HCT116 (cell line): ENCODE measurements at regions of chr17 and their contacts with region 1.

Region 1: DNA sequence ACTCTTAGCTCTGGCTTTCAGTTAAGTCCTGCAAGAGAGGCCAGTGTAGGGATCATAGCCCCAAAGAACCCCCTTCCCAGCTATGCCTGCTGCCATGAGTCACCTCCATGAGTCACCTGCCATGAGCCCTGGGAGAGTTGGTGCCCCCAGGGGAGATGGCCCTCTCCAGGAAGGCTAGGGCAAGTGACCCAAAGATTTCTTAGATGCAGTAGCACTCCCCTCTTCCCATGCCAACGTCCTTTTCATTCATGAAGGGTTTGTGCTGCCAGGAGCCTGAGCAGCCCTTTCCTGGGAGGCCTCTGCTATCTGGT is 78.6 kb upstream of the LGALS9 start:
- DNase-seq: peak; percentile 56
- ATAC-seq: peak; percentile 76
- H3K4me3 ChIP-seq: peak overlapping the region in 1 of 2 experiments; percentile 29; a peak in 2 of 4 replicates
- H3K27ac ChIP-seq: peak overlapping the region; percentile 78
- H3K4me1 ChIP-seq: peaks cover 39 to 42% of the 10 kb centered on the region in 2 experiments
- H3K27me3 ChIP-seq: no peaks in the 10 kb centered on the region
- CTCF ChIP-seq: 0 out of 6 replicates have a peak, but pooled peaks of 1 of the 3 experiments have one; percentile 5
- POLR2A ChIP-seq: no peak
- RAD21 ChIP-seq: 0 out of 2 replicates have a peak, but pooled peaks have one; percentile 12

Region 2: DNA sequence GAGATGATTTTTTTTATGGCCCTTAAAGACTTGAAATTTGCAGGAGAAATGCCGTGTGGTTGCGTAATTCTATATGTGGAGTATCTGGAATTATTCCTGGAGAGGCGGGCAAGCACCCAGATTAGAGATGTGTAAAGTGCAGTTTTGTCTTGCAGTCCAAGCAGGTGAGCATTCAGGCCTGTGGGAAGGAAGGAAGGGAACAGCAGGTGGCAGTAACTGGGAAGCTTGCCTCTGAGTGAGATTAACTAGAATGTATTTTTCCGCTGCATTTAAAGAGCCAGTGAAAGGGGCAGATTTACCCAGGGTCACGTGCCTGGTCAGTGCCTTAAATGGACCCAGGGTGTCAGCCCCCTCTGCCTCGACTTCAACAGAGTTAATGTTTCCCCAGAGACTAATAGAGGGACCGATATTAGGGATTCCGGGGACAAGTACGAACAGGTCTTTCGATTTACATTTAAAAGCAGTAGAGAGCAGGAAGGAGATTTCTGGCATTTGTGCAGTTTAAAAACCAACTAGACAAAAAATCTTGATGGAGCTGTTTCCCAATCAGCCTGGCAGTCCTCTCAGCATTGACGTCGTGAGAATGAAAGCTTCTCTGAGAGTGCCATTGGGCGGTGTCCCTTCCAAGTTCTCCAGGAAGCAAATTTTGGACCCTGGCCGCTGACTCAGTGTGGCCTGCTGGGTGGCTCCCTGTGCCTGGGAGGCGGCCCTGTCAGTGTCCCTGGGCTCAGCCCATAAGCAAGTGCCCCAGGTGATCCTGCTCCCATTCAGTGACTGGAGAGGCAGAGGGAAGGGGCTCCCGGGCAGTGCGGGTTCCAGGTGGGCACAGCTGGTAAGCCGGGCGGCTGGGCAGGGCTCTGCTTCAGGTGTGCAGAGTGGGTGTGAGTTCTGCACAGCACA is 58.0 kb before region 1 on chr17:
- CTCF ChIA-PET with region 1: interaction called, 4 read pairs
- POLR2A ChIA-PET with region 1: no interaction called
- RAD21 ChIA-PET with region 1: no interaction called
- intact Hi-C with region 1: loop called (anchors 5 kb)
- DNase-seq: peak; percentile 51
- ATAC-seq: peak; percentile 87
- H3K4me3 ChIP-seq: peak overlapping the region; percentile 32 to 36
- H3K27ac ChIP-seq: peak overlapping the region; percentile 31
- H3K4me1 ChIP-seq: peaks cover 26 to 50% of the 10 kb centered on the region in 2 experiments
- H3K27me3 ChIP-seq: no peaks in the 10 kb centered on the region
- CTCF ChIP-seq: peak; percentile 56 to 70 (median 66); a peak in 5 of 6 replicates
- POLR2A ChIP-seq: no peak
- RAD21 ChIP-seq: peak; percentile 64

Region 3: DNA sequence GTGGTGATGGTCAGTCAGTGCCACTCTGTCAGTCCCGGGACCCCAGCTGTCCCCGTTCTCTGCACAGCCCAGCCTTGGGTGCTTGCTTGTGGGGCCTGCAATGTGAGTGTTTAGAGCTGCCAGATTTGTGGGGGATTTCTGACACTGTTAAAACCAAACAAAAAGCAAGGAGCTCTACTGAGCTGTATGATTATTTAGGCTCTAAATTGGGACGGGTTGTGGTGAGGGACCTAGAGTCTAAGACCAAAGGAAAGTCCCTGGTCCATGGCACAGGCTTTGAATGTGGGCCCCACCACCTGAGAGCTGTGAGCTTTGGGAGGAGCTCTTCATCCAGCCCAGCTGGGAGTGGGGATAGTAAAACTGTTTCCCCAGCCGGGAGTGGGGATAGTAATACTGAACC is 32.9 kb before region 1 on chr17:
- CTCF ChIA-PET with region 1: no interaction called
- POLR2A ChIA-PET with region 1: no interaction called
- RAD21 ChIA-PET with region 1: no interaction called
- intact Hi-C with region 1: no loop called
- DNase-seq: no peak
- ATAC-seq: no peak
- H3K4me3 ChIP-seq: no peak overlapping the region
- H3K27ac ChIP-seq: no peak overlapping the region
- H3K4me1 ChIP-seq: peaks cover 10 to 14% of the 10 kb centered on the region in 2 experiments
- H3K27me3 ChIP-seq: no peaks in the 10 kb centered on the region
- CTCF ChIP-seq: no peak
- POLR2A ChIP-seq: no peak
- RAD21 ChIP-seq: no peak

Region 4: DNA sequence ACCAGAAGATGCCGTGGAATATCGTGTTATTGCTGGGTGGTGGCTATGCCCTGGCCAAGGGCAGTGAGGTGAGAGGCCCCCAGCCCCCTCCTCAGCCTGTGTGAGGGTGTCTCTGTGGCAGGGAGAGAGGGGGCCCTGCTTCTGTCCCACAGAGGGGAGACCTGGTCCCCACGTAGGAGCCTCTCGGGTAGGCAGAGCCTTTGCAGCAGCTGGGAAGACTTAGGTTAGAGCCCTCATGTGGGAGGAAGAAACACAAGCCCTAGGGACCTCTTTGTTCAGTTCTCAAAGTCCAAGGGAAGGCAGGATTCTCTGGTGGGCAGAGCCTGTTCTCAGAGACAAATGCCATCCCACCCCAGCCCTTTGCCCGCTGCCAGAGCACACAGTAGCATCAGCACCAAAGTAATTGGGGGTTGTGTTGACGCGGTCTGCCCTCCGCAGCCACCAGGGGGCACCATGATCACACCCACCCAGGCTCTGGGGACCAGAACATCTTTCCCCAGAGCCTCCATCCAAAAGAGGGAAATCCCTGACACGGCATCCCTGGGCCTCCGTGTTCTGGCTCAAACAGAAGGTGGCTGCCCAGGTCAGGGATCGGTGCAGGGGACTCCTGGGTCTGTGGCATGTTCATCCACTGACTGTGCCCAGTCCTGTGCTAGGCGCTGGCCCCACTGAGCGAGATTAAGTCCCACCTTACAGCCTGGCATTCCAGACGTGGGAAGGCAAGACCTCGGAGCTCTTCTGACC is 942.2 kb after region 1 on chr17:
- CTCF ChIA-PET with region 1: no interaction called
- POLR2A ChIA-PET with region 1: no interaction called
- RAD21 ChIA-PET with region 1: no interaction called
- intact Hi-C with region 1: no loop called
- DNase-seq: peak; percentile 27
- ATAC-seq: peak; percentile 94
- H3K4me3 ChIP-seq: no peak overlapping the region
- H3K27ac ChIP-seq: no peak overlapping the region
- H3K4me1 ChIP-seq: no peaks in the 10 kb centered on the region; a peak in 1 of 4 replicates
- H3K27me3 ChIP-seq: no peaks in the 10 kb centered on the region
- CTCF ChIP-seq: peak; percentile 91 to 93 (median 93)
- POLR2A ChIP-seq: no peak
- RAD21 ChIP-seq: peak; percentile 94